Endothelial cell of umbilical vein (primary cell): ENCODE measurements at regions of chr2 and their contacts with region 1.

Region 1: DNA sequence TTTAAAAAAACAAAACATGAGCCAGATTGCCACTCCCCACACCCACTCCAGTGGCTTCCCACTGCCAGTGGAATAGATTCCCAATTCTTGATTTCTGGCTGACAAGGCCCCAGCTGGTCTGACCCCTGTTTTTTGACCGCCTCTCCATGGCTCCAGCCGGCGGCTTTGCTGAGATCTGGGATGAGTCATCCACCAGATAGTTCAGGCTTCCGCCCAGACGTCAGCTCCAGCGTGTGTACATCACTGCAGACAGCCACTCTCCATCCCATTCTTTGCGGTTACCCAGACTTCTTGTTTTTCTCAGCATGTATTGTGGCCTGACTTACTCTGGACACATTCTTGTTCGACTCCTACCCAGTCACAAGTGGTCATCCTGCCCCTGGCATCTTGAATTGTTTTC is 227.9 kb downstream of the GBX2 start:
- DNase-seq: no peak
- H3K4me3 ChIP-seq: no peak overlapping the region
- H3K27ac ChIP-seq: no peak overlapping the region
- H3K4me1 ChIP-seq: peaks cover 3% of the 10 kb centered on the region
- H3K27me3 ChIP-seq: no peaks in the 10 kb centered on the region
- CTCF ChIP-seq: no peak
- POLR2A ChIP-seq: no peak

Region 2: GRCh38 chr2:235900631-235901030 is 39.7 kb before region 1 on chr2:
- CTCF ChIA-PET with region 1: interaction called, 5 read pairs
- POLR2A ChIA-PET with region 1: no interaction called
- dilution Hi-C with region 1: no loop called
- intact Hi-C with region 1: loop called (anchors 1 kb)
- DNase-seq: peak; percentile 37
- H3K4me3 ChIP-seq: no peak overlapping the region
- H3K27ac ChIP-seq: peak overlapping the region; percentile 43
- H3K4me1 ChIP-seq: peaks cover 23% of the 10 kb centered on the region
- H3K27me3 ChIP-seq: no peaks in the 10 kb centered on the region
- CTCF ChIP-seq: no peak
- POLR2A ChIP-seq: no peak

Region 3: DNA sequence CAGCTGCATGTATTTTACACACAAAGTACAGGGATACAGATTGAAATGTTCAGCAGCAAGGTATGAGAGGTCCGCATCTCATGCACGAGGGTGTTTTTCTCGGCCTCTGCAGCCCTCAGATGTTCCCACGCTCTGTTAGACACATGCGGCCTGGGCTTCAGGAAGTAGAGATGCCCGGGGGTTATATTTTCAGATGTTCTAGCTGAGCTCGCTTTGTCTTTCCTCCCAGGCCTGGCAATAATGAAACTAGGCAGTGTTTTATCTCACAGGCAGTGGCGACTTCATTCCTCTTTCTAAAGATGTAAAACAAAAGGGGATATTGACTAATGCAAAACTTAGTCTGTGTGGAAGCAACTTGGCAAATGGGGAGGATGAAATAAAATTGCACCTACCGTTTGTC is 37.1 kb after region 1 on chr2:
- CTCF ChIA-PET with region 1: no interaction called
- POLR2A ChIA-PET with region 1: no interaction called
- dilution Hi-C with region 1: no loop called
- intact Hi-C with region 1: no loop called
- DNase-seq: no peak
- H3K4me3 ChIP-seq: no peak overlapping the region
- H3K27ac ChIP-seq: no peak overlapping the region
- H3K4me1 ChIP-seq: no peaks in the 10 kb centered on the region
- H3K27me3 ChIP-seq: no peaks in the 10 kb centered on the region
- CTCF ChIP-seq: no peak
- POLR2A ChIP-seq: no peak